ENCODE measurements at regions of chr1 and their contacts with region 1.

Region 1: GRCh38 chr1:153072806-153073726 is 1.7 kb upstream of the SPRR2B start:
- DNase-seq: no peak
- H3K4me3 ChIP-seq: no peak overlapping the region
- H3K27ac ChIP-seq: no peak overlapping the region
- H3K4me1 ChIP-seq: no peaks in the 10 kb centered on the region
- H3K27me3 ChIP-seq: no peaks in the 10 kb centered on the region
- CTCF ChIP-seq: no peak
- POLR2A ChIP-seq: no peak

Region 2: DNA sequence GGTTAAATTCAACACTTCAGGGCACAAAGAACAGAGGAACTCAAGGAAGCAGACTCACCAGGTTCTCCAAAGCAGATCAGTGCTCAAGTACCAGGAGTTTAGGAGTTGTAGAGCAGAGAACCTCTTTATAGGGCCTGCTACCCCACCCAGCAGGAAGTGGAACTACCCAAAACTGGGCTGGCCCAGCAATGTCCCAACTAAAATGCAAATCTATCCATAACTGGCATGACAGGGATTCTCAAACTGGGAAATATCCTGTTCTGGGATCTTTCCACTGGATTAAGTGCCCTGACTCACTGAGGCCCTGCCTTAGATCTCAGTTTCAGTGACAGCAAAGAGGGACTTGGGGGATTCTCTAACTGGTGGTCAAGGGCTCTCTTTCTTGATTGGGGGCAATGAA is 21.4 kb after region 1 on chr1 and contains the start of gene SPRR2E:
- CTCF ChIA-PET with region 1: no interaction called
- POLR2A ChIA-PET with region 1: no interaction called
- dilution Hi-C with region 1: no loop called
- intact Hi-C with region 1: loop called (anchors 1 kb)
- DNase-seq: no peak
- H3K4me3 ChIP-seq: no peak within 1 kb of the TSS
- H3K27ac ChIP-seq: no peak within 1 kb of the TSS
- H3K4me1 ChIP-seq: no peaks in the 10 kb centered on the region
- H3K27me3 ChIP-seq: no peaks in the 10 kb centered on the region
- CTCF ChIP-seq: no peak
- POLR2A ChIP-seq: no peak
- total RNA-seq, gene SPRR2E: not detected in 2 replicates

Measured in endothelial cell of umbilical vein (primary cell).